WTC11 (cell line): ENCODE measurements at regions of chr13 and their contacts with region 1.

Region 1: DNA sequence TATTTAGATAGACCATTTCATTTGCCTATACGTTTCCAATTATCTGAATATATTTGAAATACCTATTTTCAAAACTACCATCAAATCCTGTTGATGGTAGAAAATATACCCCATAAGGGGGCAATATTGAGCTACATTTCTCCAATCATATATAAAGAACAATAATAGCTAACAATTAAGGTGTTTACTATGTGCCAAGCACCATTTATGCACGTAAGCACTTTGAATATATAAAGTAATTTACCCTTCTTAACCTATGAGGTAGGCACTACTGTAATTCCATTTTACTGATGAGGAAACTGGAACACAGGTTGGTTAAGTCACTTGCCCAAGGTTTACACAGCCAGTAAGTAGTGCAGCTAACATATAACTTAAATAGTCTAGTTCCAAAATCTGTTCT is 79.2 kb downstream of the UBL3 start:
- DNase-seq: no peak
- ATAC-seq: no peak
- H3K4me3 Mint-ChIP-seq: no peak overlapping the region
- H3K27ac Mint-ChIP-seq: no peak overlapping the region
- H3K4me1 Mint-ChIP-seq: peaks cover 24% of the 10 kb centered on the region
- H3K27me3 Mint-ChIP-seq: no peaks in the 10 kb centered on the region
- CTCF ChIP-seq: 0 out of 2 replicates have a peak, but pooled peaks have one; percentile 19

Region 2: GRCh38 chr13:29496240-29496712 is 275.0 kb before region 1 on chr13:
- CTCF ChIA-PET with region 1: no interaction called
- POLR2A ChIA-PET with region 1: no interaction called
- DNase-seq: no peak
- ATAC-seq: no peak
- H3K4me3 Mint-ChIP-seq: no peak overlapping the region
- H3K27ac Mint-ChIP-seq: no peak overlapping the region
- H3K4me1 Mint-ChIP-seq: peaks cover 8% of the 10 kb centered on the region
- H3K27me3 Mint-ChIP-seq: no peaks in the 10 kb centered on the region
- CTCF ChIP-seq: no peak

Region 3: GRCh38 chr13:29786698-29787097 is 15.5 kb after region 1 on chr13:
- CTCF ChIA-PET with region 1: interaction called, 11 read pairs
- POLR2A ChIA-PET with region 1: no interaction called
- DNase-seq: no peak
- ATAC-seq: no peak
- H3K4me3 Mint-ChIP-seq: no peak overlapping the region
- H3K27ac Mint-ChIP-seq: no peak overlapping the region
- H3K4me1 Mint-ChIP-seq: 0 out of 2 replicates have a peak, but pooled peaks cover 7% of the 10 kb centered on the region
- H3K27me3 Mint-ChIP-seq: no peaks in the 10 kb centered on the region
- CTCF ChIP-seq: no peak

Region 4: GRCh38 chr13:29923554-29924481 is 152.6 kb after region 1 on chr13:
- CTCF ChIA-PET with region 1: interaction called, 23 read pairs
- POLR2A ChIA-PET with region 1: no interaction called
- DNase-seq: peak; percentile 71
- ATAC-seq: peak; percentile 94
- H3K4me3 Mint-ChIP-seq: no peak overlapping the region
- H3K27ac Mint-ChIP-seq: no peak overlapping the region
- H3K4me1 Mint-ChIP-seq: peaks cover 18% of the 10 kb centered on the region
- H3K27me3 Mint-ChIP-seq: peaks cover 16% of the 10 kb centered on the region
- CTCF ChIP-seq: peak; percentile 89

Region 5: DNA sequence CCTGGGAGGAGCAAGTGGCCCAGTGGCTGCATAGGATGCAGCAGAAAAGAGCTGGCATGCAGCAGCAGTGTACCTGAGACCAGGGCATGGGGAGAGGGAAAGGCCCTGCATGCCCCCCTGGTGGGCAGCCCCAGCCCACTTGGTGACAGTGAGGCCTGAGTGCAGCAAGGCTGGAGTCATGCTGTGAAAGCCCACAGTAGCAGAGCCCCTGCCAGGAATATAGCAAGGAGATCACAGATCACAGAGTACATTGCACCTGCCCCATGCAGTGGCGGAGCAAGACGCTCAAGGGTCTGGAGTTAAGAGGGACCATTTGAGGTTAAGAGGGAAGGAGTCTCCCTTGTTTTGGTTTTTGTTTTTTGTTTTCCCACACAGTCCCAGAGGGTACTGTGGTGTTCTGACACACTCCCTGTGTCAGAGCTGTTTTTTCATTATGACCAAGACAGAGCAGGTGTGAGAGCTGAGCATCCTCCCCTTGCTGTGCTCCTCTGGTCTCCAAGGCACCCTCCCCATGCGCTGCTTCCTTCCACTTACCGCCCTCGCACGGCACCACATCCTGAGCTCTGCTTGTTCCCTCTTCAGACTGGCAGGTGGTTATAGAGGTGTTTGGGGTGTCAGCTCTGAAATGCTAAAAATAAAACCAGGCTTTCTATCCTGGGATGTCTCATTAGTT is 164.2 kb after region 1 on chr13:
- CTCF ChIA-PET with region 1: interaction called, 11 read pairs
- POLR2A ChIA-PET with region 1: no interaction called
- DNase-seq: no peak
- ATAC-seq: peak; percentile 51
- H3K4me3 Mint-ChIP-seq: no peak overlapping the region
- H3K27ac Mint-ChIP-seq: no peak overlapping the region
- H3K4me1 Mint-ChIP-seq: peaks cover 36% of the 10 kb centered on the region
- H3K27me3 Mint-ChIP-seq: peaks cover 32% of the 10 kb centered on the region
- CTCF ChIP-seq: no peak

Region 6: GRCh38 chr13:30009411-30009810 is 238.2 kb after region 1 on chr13:
- CTCF ChIA-PET with region 1: no interaction called
- POLR2A ChIA-PET with region 1: no interaction called
- DNase-seq: no peak
- ATAC-seq: no peak
- H3K4me3 Mint-ChIP-seq: no peak overlapping the region
- H3K27ac Mint-ChIP-seq: no peak overlapping the region
- H3K4me1 Mint-ChIP-seq: peaks cover 3% of the 10 kb centered on the region; the same call in 1 of the 2 replicates
- H3K27me3 Mint-ChIP-seq: no peaks in the 10 kb centered on the region; the same call in 1 of the 2 replicates
- CTCF ChIP-seq: no peak